ENCODE measurements at regions of chr2 and their contacts with region 1.

Region 1: GRCh38 chr2:36433311-36434217 is 78.0 kb downstream of the CRIM1 start:
- DNase-seq: peak; percentile 76 to 83
- H3K4me3 ChIP-seq: peak overlapping the region in 2 of 3 donors; percentile 7 to 34
- H3K27ac ChIP-seq: peak overlapping the region; percentile 77 to 86
- H3K4me1 ChIP-seq: peaks cover 5 to 17% of the 10 kb centered on the region in 2 donors
- H3K27me3 ChIP-seq: no peaks in the 10 kb centered on the region
- CTCF ChIP-seq: no peak
- POLR2A ChIP-seq: no peak

Region 2: GRCh38 chr2:36355151-36355889 is 78.2 kb before region 1 on chr2 and contains the start of gene CRIM1:
- intact Hi-C with region 1: loop called (anchors 10 kb)
- DNase-seq: peak; percentile 83 to 86
- H3K4me3 ChIP-seq: peak within 1 kb of the TSS; percentile 81 to 98 (median 93)
- H3K27ac ChIP-seq: peak within 1 kb of the TSS; percentile 93 to 98
- H3K4me1 ChIP-seq: peaks cover under 1 to 8% of the 10 kb centered on the region in 2 donors
- H3K27me3 ChIP-seq: no peaks in the 10 kb centered on the region
- CTCF ChIP-seq: no peak
- POLR2A ChIP-seq: no peak
- total RNA-seq, gene CRIM1: 166 to 187 (median 178) TPM

Region 3: DNA sequence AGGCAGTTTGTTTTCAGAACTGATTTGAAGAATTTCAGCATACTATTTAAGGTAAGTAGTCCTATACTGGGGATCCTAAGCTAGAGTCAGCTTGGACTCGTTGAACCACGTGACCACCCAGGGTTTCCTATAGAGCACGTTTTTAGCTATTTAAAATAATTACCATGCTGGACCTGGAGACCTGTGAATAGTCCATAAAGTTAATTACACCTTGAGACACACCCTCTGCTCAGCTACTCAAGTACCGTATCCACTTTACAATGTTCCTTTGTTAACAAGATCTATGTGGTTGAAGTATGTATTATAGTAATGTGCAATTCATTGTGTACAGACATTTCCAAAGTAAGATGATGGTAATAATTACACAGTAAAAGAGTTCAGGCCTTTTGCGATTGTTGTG is 10.4 kb before region 1 on chr2:
- intact Hi-C with region 1: loop called (anchors 1 kb)
- DNase-seq: no peak
- H3K4me3 ChIP-seq: no peak overlapping the region
- H3K27ac ChIP-seq: peak overlapping the region in 1 of 2 donors; percentile 14
- H3K4me1 ChIP-seq: no peaks in the 10 kb centered on the region
- H3K27me3 ChIP-seq: no peaks in the 10 kb centered on the region
- CTCF ChIP-seq: no peak
- POLR2A ChIP-seq: no peak

Region 4: GRCh38 chr2:36450466-36451196 is 17.1 kb after region 1 on chr2:
- intact Hi-C with region 1: no loop called
- DNase-seq: no peak
- H3K4me3 ChIP-seq: no peak overlapping the region
- H3K27ac ChIP-seq: peak overlapping the region; percentile 69 to 82
- H3K4me1 ChIP-seq: no peaks in the 10 kb centered on the region
- H3K27me3 ChIP-seq: no peaks in the 10 kb centered on the region
- CTCF ChIP-seq: no peak
- POLR2A ChIP-seq: no peak